Heart left ventricle (tissue), 16 donors: ENCODE measurements at regions of chr17 and their contacts with region 1.

Region 1: GRCh38 chr17:47949136-47949759 is 7.9 kb downstream of the PNPO start:
- DNase-seq: peak; percentile 88 to 95 (median 89)
- ATAC-seq: peak; percentile 68 to 89 (median 84)
- H3K4me3 ChIP-seq: peak overlapping the region in 10 of 12 donors; percentile 31 to 49 (median 38)
- H3K27ac ChIP-seq: peak overlapping the region; percentile 23 to 76 (median 58)
- H3K4me1 ChIP-seq: peaks cover 5 to 53% (median 16%) of the 10 kb centered on the region in 12 donors
- H3K27me3 ChIP-seq: no peaks in the 10 kb centered on the region
- CTCF ChIP-seq: peak; percentile 85 to 96 (median 88)
- POLR2A ChIP-seq: peak in 1 of 2 donors; percentile 7

Region 2: DNA sequence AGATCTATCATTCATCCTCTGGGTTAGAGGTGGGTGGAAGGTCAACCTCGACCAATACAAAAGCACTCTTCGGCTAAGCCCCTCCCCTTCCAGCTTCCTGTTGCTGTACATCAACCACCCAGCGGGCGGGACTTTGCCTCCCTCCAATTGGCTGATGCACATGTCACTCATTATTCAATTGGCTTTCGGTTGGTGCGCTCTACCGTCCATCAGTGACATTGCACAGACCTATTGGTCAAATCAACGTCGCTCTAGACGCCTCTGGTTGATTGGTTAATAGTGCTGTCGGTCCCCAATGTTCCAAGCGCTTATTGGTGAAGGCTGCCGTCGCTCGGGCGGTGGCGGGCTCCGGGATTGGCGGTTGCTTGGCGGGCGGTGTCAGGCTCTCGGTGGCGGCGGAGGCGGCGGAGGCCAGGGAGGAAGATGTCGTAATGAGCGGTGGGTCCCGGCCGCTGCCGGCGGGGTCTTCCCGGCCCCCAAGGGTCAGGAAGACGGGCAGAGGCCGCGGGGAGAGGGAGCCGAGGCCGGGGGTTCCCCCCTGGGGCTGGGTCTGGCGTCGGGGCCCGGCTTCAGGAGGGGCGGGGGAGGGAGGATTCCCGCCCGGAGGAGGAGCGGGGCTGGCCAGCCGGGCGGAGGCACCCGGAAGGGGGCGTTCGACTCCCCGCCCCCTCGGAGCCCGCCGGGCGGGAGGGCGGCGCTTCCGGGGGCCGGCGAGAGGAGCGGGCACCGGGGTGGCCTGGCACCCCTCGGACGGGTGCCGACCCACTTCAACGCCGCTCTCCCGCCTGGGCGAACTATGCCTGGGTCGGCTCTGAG is 53.2 kb before region 1 on chr17 and contains the start of gene SP2:
- intact Hi-C with region 1: loop called in 7 of 10 experiments (anchors 2 to 5 kb)
- DNase-seq: peak; percentile 99 to 100 (median 99)
- ATAC-seq: peak; percentile 95 to 97 (median 96)
- H3K4me3 ChIP-seq: peak within 1 kb of the TSS; percentile 72 to 94 (median 79)
- H3K27ac ChIP-seq: peak within 1 kb of the TSS; percentile 98 to 100 (median 99)
- H3K4me1 ChIP-seq: peaks cover 0 to 58% (median 48%) of the 10 kb centered on the region in 12 donors
- H3K27me3 ChIP-seq: no peaks in the 10 kb centered on the region
- CTCF ChIP-seq: peak in 7 of 12 donors; percentile 3 to 53 (median 30)
- POLR2A ChIP-seq: peak; percentile 73 to 90
- total RNA-seq, gene SP2: 11.1 to 21.2 (median 16.7) TPM

Region 3: DNA sequence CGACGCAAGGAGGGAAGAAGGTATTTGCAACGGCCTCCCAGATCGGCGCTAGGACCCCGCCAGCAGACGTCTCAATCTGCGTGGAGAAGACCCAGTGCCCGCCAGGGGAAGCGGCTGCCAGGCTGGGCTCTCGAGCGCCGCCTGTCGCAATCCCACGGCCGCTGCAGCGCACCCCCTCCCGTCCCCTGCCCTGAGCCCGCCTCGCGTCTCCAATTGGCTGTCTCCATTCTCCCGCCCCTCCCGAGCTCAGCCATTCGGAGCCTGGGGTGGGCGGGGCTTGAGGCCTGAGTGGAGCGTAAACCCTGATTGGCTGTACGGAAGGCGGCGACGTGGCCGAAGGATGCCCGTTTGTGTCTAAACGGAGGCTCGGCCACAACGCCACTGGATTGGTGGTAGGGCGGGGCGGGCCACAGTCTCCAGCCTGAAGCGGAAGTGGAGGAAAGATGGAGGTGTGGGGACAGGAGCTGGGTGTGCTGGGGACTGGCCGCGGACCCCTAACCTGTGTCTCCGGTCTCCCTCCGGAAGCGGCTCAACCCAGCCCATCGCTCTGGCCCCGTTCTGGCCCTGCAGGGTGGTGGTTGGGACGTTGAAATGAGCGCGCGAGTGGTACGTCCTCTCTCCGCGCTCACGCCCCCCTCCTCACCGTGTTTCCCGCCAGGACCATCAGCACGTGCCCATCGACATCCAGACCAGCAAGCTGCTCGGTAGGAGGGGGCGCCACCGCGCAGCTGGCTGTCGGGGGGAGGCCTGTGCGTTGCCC is 21.6 kb after region 1 on chr17 and contains the start of gene CDK5RAP3:
- intact Hi-C with region 1: loop called in 5 of 10 experiments (anchors 1 to 2 kb)
- DNase-seq: peak; percentile 100
- ATAC-seq: peak; percentile 99 to 100 (median 100)
- H3K4me3 ChIP-seq: peak within 1 kb of the TSS; percentile 80 to 98 (median 90)
- H3K27ac ChIP-seq: peak within 1 kb of the TSS in 11 of 12 donors; percentile 31 to 90 (median 79)
- H3K4me1 ChIP-seq: peaks cover 0 to 24% (median 14%) of the 10 kb centered on the region in 12 donors
- H3K27me3 ChIP-seq: no peaks in the 10 kb centered on the region
- CTCF ChIP-seq: peak; percentile 95 to 99 (median 98)
- POLR2A ChIP-seq: peak in 1 of 2 donors; percentile 65
- total RNA-seq, gene CDK5RAP3: 41.2 to 80.9 (median 53.6) TPM